Activated CD8-positive, alpha-beta memory T cell treated with anti-CD3 and anti-CD28 coated beads, Interleukin-2, amount 10 ng/mL, durations not matched to agents 7 days and 5 days (primary cell): ENCODE measurements at regions of chr1 and their contacts with region 1.

Region 1: DNA sequence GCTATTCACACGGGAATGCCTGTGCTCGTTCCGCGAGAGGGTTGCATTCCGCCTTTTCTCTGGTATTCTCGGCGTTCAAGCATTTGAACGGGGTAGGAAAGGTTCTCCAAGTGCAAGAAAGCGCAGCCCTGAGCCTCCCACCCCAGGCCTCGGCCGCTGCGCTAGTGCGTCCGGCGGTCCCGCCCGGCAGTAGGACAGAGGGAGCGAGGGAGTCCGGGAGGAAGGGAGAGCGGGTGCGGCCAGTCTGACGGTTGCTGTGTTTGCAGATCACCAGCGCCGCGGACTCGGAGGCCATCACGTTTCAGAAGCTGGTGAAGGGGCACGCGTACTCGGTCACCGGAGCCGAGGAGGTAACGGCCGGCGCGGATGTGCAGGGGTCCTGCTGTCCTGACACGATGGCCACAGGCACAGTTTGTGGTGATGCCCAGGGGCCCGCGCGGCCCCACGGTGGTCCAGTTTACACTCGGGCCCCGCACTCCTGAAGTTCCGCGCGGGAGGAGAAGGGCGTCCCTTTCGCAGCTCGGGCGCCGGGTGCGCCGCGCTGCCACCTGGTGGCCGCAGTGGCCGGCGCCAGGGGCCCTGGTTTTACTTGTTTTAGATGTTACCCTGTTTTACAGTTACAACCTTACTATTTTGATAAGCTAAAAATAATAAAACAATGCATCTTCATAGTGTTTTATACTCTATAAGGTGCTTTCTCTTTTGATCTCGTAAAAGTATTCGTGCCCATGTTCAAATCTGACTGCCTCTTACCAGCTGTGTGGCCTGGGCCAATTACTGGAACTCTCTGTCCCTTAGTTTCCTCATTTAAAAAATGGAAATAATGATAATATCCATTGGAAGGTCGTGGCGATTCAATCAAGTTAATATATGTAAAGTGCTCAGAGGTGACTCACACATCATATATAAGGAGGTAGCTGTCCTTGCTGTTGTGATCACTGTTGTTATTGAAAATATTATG is 36.7 kb downstream of the CAPN2 start:
- DNase-seq: peak; percentile 67
- ATAC-seq: peak; percentile 75
- H3K4me3 Mint-ChIP-seq: peak overlapping the region; percentile 57
- H3K27ac Mint-ChIP-seq: peak overlapping the region; percentile 78
- H3K4me1 Mint-ChIP-seq: peaks cover 30% of the 10 kb centered on the region
- H3K27me3 Mint-ChIP-seq: no peaks in the 10 kb centered on the region

Region 2: GRCh38 chr1:223700942-223701637 is 48.0 kb before region 1 on chr1:
- CTCF ChIA-PET with region 1: interaction called, 76 read pairs
- DNase-seq: no peak
- ATAC-seq: peak; percentile 56
- H3K4me3 Mint-ChIP-seq: no peak overlapping the region
- H3K27ac Mint-ChIP-seq: no peak overlapping the region
- H3K4me1 Mint-ChIP-seq: peaks cover 38% of the 10 kb centered on the region
- H3K27me3 Mint-ChIP-seq: no peaks in the 10 kb centered on the region

Region 3: DNA sequence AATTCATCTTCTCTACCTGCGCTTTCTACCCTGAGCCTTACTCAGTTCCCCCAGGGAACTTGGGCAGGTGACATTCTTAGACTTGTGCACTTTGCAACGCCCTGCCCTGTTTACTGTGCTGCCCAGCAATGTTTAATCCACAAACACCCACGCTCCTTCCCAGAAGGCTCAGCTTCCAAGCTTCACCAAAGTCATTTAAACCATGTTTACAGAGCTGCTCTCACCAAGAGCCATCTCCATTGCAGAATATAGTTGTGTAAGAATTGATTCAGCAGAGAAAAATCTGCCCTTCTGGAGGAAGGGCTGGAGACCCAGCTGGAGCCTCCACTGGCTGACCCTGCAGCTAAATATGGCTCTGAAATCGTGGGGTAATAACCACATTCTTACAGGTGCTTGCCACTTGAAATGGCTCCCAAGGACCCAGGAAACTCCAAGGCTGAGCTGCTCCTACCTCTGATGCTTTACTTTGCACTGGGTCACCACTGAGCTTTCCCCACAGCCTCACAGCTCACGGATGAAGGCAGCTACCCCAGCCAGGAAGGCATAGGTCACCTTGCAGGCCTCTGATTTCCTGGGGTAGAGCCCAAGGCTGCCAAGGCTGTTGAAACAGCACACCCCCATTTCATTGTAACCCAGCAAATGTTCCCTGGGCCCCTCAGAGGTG is 28.0 kb before region 1 on chr1:
- CTCF ChIA-PET with region 1: interaction called, 44 read pairs
- DNase-seq: no peak
- ATAC-seq: no peak
- H3K4me3 Mint-ChIP-seq: no peak overlapping the region
- H3K27ac Mint-ChIP-seq: peak overlapping the region; percentile 72
- H3K4me1 Mint-ChIP-seq: peaks cover 87% of the 10 kb centered on the region
- H3K27me3 Mint-ChIP-seq: no peaks in the 10 kb centered on the region

Region 4: DNA sequence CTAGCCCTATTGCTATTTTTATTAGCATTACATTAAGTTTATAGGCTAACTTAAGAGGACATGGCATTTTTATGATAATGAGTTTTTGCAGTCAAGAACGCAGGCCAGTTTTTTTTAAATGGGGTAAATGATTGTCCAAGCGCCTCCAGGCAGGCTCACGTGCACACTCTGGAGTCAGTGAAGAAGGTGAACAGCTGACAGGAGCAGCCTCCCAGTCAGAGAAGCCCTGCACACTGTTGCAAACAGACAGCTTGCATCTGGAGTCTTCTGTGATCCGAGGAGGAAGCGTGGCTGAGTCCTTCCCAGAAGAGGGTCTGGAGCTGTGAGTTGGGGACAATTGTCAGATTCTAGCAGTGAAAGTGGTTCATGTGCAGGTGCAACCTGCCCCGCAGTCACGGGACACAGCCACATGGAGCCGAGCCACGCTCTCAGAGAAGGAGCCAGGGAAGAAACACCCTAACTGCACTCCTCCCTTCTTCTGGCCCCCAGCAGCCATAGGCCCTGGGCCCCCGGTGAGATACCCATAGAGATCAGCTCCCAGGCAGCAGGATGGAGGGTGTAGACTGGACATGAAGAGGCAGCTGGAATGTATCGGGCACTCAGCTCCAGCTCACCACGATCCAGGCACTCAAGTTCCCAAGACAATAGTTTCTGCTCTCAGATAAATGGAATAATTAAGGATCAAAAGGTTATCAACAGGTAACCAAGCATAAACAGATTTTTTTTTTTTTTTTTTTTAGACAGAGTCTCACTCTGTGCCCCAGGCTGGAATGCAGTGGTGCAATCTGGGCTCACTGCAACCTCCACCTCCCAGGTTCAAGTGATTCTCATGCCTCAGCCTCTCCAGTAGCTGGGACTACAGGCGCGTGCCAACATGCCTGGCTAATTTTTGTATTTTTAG is 10.3 kb before region 1 on chr1:
- CTCF ChIA-PET with region 1: interaction called, 20 read pairs
- DNase-seq: no peak
- ATAC-seq: no peak
- H3K4me3 Mint-ChIP-seq: no peak overlapping the region
- H3K27ac Mint-ChIP-seq: no peak overlapping the region
- H3K4me1 Mint-ChIP-seq: peaks cover 8% of the 10 kb centered on the region
- H3K27me3 Mint-ChIP-seq: no peaks in the 10 kb centered on the region

Region 5: GRCh38 chr1:223771814-223772770 is 23.0 kb after region 1 on chr1:
- CTCF ChIA-PET with region 1: interaction called, 15 read pairs
- DNase-seq: peak; percentile 39
- ATAC-seq: peak; percentile 26
- H3K4me3 Mint-ChIP-seq: no peak overlapping the region
- H3K27ac Mint-ChIP-seq: peak overlapping the region; percentile 61
- H3K4me1 Mint-ChIP-seq: peaks cover 54% of the 10 kb centered on the region
- H3K27me3 Mint-ChIP-seq: no peaks in the 10 kb centered on the region